Activated CD4-positive, alpha-beta T cell treated with anti-CD3 and anti-CD28 coated beads for 36 hours (primary cell): ENCODE measurements at regions of chr11 and their contacts with region 1.

Region 1: GRCh38 chr11:130002846-130003716 is 446 bp upstream of the PRDM10 start:
- DNase-seq: peak; percentile 91
- ATAC-seq: peak; percentile 82
- H3K4me3 Mint-ChIP-seq: peak overlapping the region; percentile 90
- H3K27ac Mint-ChIP-seq: peak overlapping the region; percentile 100
- H3K4me1 Mint-ChIP-seq: peaks cover 32% of the 10 kb centered on the region
- H3K27me3 Mint-ChIP-seq: no peaks in the 10 kb centered on the region

Region 2: DNA sequence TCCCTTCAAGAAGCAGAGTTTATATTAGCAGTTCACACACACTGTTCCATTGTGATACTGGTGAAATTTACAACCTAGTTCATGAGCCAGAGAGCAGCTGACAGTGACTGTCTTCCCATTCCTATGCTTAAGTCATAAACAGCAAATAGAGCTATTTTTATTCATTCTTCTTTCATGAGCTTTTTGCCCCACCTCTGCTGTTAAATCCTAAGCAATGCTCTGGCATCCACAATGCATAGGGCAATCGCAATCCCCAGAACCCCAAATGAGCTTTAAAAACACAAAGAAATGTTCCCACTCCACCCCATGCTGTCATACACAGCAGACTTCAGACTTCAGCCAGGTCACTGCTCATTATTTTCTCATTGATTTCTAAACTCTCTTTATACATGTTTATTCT is 1723.2 kb before region 1 on chr11:
- CTCF ChIA-PET with region 1: no interaction called
- POLR2A ChIA-PET with region 1: no interaction called
- intact Hi-C with region 1: loop called in 1 of 2 experiments (anchors 10 kb)
- DNase-seq: no peak
- ATAC-seq: no peak
- H3K4me3 Mint-ChIP-seq: no peak overlapping the region
- H3K27ac Mint-ChIP-seq: no peak overlapping the region
- H3K4me1 Mint-ChIP-seq: peaks cover 20% of the 10 kb centered on the region
- H3K27me3 Mint-ChIP-seq: no peaks in the 10 kb centered on the region

Region 3: GRCh38 chr11:129815596-129816461 is 187.3 kb before region 1 on chr11 and contains the start of gene TMEM45B:
- CTCF ChIA-PET with region 1: no interaction called
- POLR2A ChIA-PET with region 1: no interaction called
- intact Hi-C with region 1: loop called in 1 of 2 experiments (anchors 1 kb)
- DNase-seq: peak; percentile 62
- ATAC-seq: peak; percentile 63
- H3K4me3 Mint-ChIP-seq: peak within 1 kb of the TSS; percentile 72
- H3K27ac Mint-ChIP-seq: peak within 1 kb of the TSS; percentile 64
- H3K4me1 Mint-ChIP-seq: peaks cover 24% of the 10 kb centered on the region
- H3K27me3 Mint-ChIP-seq: peaks cover 12% of the 10 kb centered on the region
- total RNA-seq, gene TMEM45B: 2.1 to 3.1 TPM

Region 4: GRCh38 chr11:129960216-129961214 is 42.6 kb before region 1 on chr11:
- CTCF ChIA-PET with region 1: no interaction called
- POLR2A ChIA-PET with region 1: no interaction called
- intact Hi-C with region 1: loop called (anchors 1 to 2 kb)
- DNase-seq: peak; percentile 45
- ATAC-seq: peak; percentile 90
- H3K4me3 Mint-ChIP-seq: no peak overlapping the region
- H3K27ac Mint-ChIP-seq: peak overlapping the region; percentile 51
- H3K4me1 Mint-ChIP-seq: peaks cover 9% of the 10 kb centered on the region
- H3K27me3 Mint-ChIP-seq: no peaks in the 10 kb centered on the region

Region 5: DNA sequence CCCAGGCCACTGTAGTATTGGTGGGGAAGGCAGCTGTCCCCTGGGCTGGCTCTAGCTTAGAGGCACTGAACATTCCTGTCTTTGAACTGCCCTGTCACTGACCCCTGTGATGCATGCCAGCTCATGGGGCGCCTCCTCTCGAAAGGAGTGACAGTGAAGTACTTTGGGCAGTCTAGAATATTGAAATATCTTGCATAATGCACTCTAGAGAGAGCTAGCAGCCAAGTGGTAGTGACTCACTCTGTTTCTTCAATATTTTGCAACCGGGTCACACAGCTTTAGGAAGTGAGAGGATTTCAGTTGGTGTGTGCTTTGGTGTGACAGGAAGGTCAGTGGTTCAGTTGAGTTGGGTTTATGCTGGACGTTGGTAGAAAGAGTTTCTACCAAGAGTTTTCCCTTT is 121.0 kb after region 1 on chr11:
- CTCF ChIA-PET with region 1: interaction called, 4 read pairs
- POLR2A ChIA-PET with region 1: interaction called, 3 read pairs
- intact Hi-C with region 1: loop called (anchors 2 to 5 kb)
- DNase-seq: no peak
- ATAC-seq: no peak
- H3K4me3 Mint-ChIP-seq: no peak overlapping the region
- H3K27ac Mint-ChIP-seq: no peak overlapping the region
- H3K4me1 Mint-ChIP-seq: peaks cover 34% of the 10 kb centered on the region
- H3K27me3 Mint-ChIP-seq: peaks cover 4% of the 10 kb centered on the region

Region 6: DNA sequence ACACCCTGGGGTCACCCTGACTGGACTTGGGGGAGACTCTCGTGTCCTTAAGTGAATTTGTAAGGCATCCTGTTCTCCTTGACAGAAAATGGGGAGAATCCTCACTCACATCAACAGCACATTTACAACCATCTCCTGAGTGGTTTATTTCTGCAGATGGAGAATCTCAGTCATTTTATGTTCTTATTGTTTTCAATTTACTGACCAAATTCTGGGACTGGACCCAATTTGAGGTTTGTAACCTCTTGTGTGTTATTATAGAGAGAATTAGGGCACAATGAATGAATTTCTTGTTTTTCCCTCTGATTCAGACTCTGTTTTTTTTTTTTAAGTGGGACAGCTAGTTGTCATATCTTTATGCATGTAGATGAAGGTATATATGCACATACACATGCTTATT is 550.2 kb after region 1 on chr11:
- CTCF ChIA-PET with region 1: no interaction called
- POLR2A ChIA-PET with region 1: no interaction called
- intact Hi-C with region 1: no loop called
- DNase-seq: no peak
- ATAC-seq: no peak
- H3K4me3 Mint-ChIP-seq: no peak overlapping the region
- H3K27ac Mint-ChIP-seq: no peak overlapping the region
- H3K4me1 Mint-ChIP-seq: no peaks in the 10 kb centered on the region
- H3K27me3 Mint-ChIP-seq: peaks cover 5% of the 10 kb centered on the region

Region 7: GRCh38 chr11:130916238-130916855 is 913.3 kb after region 1 on chr11 and contains the start of gene SNX19:
- CTCF ChIA-PET with region 1: no interaction called
- POLR2A ChIA-PET with region 1: no interaction called
- intact Hi-C with region 1: loop called (anchors 2 to 10 kb)
- DNase-seq: peak; percentile 94
- ATAC-seq: peak; percentile 100
- H3K4me3 Mint-ChIP-seq: peak within 1 kb of the TSS; percentile 78
- H3K27ac Mint-ChIP-seq: peak within 1 kb of the TSS; percentile 84
- H3K4me1 Mint-ChIP-seq: peaks cover 32% of the 10 kb centered on the region
- H3K27me3 Mint-ChIP-seq: peaks cover 4% of the 10 kb centered on the region
- total RNA-seq, gene SNX19: 22.7 to 29.5 TPM